ENCODE measurements at regions of chr17 and their contacts with region 1.

Region 1: GRCh38 chr17:75012346-75013091 is at the start of gene MRPL58:
- DNase-seq: peak; percentile 72 to 91 (median 86)
- H3K4me3 ChIP-seq: peak within 1 kb of the TSS; percentile 63 to 95 (median 86)
- H3K27ac ChIP-seq: peak within 1 kb of the TSS; percentile 67 to 98 (median 92)
- H3K27me3 ChIP-seq: no peaks in the 10 kb centered on the region
- CTCF ChIP-seq: peak in 55 of 56 donors; percentile 17 to 76 (median 60)
- total RNA-seq, gene MRPL58: 11.3 to 30.9 (median 21.5) TPM

Region 2: GRCh38 chr17:74987418-74987908 is 25.1 kb before region 1 on chr17 and contains the start of gene CDR2L:
- intact Hi-C with region 1: loop called (anchors 1 to 2 kb)
- DNase-seq: peak; percentile 98 to 99 (median 99)
- H3K4me3 ChIP-seq: peak within 1 kb of the TSS; percentile 19 to 97 (median 83)
- H3K27ac ChIP-seq: peak within 1 kb of the TSS; percentile 29 to 98 (median 90)
- H3K27me3 ChIP-seq: no peaks in the 10 kb centered on the region
- CTCF ChIP-seq: peak in 16 of 56 donors; percentile 1 to 48 (median 14)
- total RNA-seq, gene CDR2L: 11.9 to 63.9 (median 22.6) TPM

Region 3: DNA sequence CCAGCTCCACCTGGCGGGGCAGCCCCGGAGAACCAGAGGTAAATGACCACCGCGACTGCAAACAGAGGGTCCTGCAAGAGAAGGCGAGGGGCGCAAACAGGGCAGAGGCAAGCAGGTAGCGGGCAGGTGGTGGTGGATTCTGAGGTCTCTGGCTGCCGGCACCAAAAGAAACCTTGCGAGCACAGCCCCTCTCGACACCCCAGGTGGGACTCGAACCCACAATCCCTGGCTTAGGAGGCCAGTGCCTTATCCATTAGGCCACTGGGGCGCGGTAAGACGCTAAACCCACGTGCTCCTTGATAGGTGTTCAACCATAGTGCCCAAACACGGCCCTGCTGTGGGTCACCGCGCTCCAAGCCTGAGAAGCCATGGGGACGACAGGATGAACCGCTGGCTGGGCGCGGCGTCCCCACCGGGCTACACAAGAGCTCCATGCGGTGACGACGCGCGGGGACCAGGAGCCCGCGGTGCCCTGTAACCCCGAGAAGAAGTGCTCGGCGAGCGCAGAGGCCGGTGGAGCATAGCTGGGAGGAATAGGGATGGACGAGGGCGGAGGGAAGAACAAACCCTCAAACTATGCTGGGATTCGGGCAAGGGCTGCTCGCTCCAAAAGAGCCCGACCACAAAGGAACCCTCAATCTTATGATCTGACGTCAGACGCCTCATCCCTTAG is 21.9 kb after region 1 on chr17:
- intact Hi-C with region 1: loop called (anchors 2 kb)
- DNase-seq: peak; percentile 78 to 94 (median 87)
- H3K4me3 ChIP-seq: peak overlapping the region; percentile 44 to 97 (median 80)
- H3K27ac ChIP-seq: peak overlapping the region; percentile 60 to 99 (median 97)
- H3K27me3 ChIP-seq: no peaks in the 10 kb centered on the region
- CTCF ChIP-seq: peak in 1 of 56 donors; percentile 11

Region 4: GRCh38 chr17:75046582-75047289 is 34.2 kb after region 1 on chr17 and contains the starts of genes ATP5PD and KCTD2:
- intact Hi-C with region 1: loop called in 1 of 2 experiments (anchors 5 kb)
- DNase-seq: peak; percentile 86 to 98 (median 96)
- H3K4me3 ChIP-seq: peak within 1 kb of the TSS; percentile 66 to 100 (median 97)
- H3K27ac ChIP-seq: peak within 1 kb of the TSS; percentile 64 to 98 (median 90)
- H3K27me3 ChIP-seq: no peaks in the 10 kb centered on the region
- CTCF ChIP-seq: peak in 36 of 56 donors; percentile 5 to 57 (median 28)
- total RNA-seq, gene ATP5PD: 142 to 353 (median 254) TPM
- total RNA-seq, gene KCTD2: 52.5 to 122 (median 79.8) TPM